Panc1 (cell line): ENCODE measurements at regions of chr18 and their contacts with region 1.

Region 1: GRCh38 chr18:36149514-36150289 is 20.0 kb downstream of the ELP2 start:
- DNase-seq: no peak
- ATAC-seq: no peak
- H3K4me3 ChIP-seq: no peak overlapping the region
- H3K27ac ChIP-seq: no peak overlapping the region
- H3K4me1 ChIP-seq: no peaks in the 10 kb centered on the region
- H3K27me3 ChIP-seq: no peaks in the 10 kb centered on the region
- CTCF ChIP-seq: no peak

Region 2: GRCh38 chr18:36012891-36013290 is 136.8 kb before region 1 on chr18:
- CTCF ChIA-PET with region 1: no interaction called
- POLR2A ChIA-PET with region 1: no interaction called
- in situ Hi-C with region 1: no loop called
- intact Hi-C with region 1: no loop called
- DNase-seq: no peak
- ATAC-seq: no peak
- H3K4me3 ChIP-seq: no peak overlapping the region
- H3K27ac ChIP-seq: no peak overlapping the region
- H3K4me1 ChIP-seq: no peaks in the 10 kb centered on the region
- H3K27me3 ChIP-seq: no peaks in the 10 kb centered on the region
- CTCF ChIP-seq: no peak

Region 3: GRCh38 chr18:36411745-36412168 is 262.1 kb after region 1 on chr18:
- CTCF ChIA-PET with region 1: interaction called, 10 read pairs
- POLR2A ChIA-PET with region 1: no interaction called
- in situ Hi-C with region 1: no loop called
- intact Hi-C with region 1: no loop called
- DNase-seq: no peak
- ATAC-seq: 0 out of 2 replicates have a peak, but pooled peaks have one; percentile 68
- H3K4me3 ChIP-seq: no peak overlapping the region
- H3K27ac ChIP-seq: no peak overlapping the region
- H3K4me1 ChIP-seq: no peaks in the 10 kb centered on the region
- H3K27me3 ChIP-seq: no peaks in the 10 kb centered on the region
- CTCF ChIP-seq: peak; percentile 56